PC-9 (cell line): ENCODE measurements at regions of chr1 and their contacts with region 1.

Region 1: DNA sequence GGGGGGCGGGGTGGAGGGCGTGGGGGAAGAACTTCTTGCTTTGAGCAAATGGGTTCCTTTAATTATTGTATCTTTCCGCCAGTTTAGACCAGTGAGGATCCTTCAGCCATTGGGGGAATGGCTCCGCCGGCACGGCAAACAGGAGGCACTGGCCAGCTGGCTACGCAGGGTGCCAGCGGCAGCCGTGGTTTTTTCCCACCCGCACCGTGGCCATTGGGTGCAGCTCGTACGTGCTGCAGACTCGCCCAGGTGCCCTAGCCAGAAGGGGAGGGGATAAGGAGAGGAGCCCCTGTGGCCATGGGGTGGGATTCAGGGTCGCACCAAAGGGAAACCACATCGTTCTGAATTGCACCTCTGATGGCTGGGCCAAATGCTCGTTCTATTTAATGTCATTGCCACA is 65.6 kb downstream of the RGSL1 start:
- DNase-seq: no peak
- H3K4me3 ChIP-seq: no peak overlapping the region
- H3K27ac ChIP-seq: no peak overlapping the region
- H3K4me1 ChIP-seq: no peaks in the 10 kb centered on the region
- H3K27me3 ChIP-seq: peaks cover 6% of the 10 kb centered on the region; the same call in 1 of the 2 replicates
- CTCF ChIP-seq: no peak

Region 2: DNA sequence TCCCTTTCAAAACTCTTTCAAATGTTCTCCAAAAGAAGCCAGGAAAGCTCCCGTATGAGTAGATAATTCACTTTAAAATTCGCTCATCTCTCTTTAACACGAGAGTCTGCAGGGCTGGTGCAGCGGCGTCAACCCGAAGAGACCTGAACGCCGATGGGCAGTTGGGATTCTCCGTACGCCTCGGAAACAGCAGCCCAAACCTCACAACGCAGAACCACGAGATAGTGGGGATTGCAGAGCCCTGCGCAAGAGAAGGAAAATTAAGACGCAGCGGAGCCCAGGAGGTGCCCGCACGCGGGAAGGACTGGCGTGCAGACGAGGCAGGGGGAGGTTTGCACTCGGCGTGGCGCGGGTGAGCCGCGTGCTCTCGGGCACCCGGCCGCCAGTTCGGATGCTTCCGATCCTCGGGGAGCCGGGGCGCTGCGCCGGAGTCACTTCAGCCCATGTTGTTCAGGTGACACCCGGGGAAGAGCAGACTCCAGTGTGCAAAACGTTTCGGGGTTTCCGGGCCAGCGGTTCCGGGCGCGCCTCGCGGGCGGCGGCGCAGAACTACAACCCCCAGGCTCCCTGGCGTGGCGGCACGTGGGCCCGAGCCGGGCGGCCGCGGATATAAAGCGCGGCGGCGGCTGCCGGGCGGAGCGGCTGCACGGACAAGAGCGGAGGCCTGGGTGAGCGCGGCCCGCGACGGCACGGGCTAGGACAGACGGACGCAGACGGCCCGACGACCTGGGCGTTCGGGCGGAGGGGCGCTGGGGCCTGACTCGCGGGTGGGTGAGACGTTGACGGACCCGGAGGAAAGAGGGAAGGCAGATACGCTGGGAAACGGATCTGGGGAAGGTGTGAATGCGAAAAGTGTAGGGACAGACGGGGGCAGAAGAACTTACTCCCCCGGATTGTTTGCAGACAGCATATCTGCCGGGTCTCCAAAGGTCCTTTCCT is 273.9 kb after region 1 on chr1 and contains the start of gene NPL:
- CTCF ChIA-PET with region 1: no interaction called
- POLR2A ChIA-PET with region 1: no interaction called
- intact Hi-C with region 1: loop called (anchors 10 kb)
- DNase-seq: peak in 1 of 2 experiments; percentile 75
- H3K4me3 ChIP-seq: peak within 1 kb of the TSS; percentile 63
- H3K27ac ChIP-seq: no peak within 1 kb of the TSS
- H3K4me1 ChIP-seq: peaks cover 6% of the 10 kb centered on the region
- H3K27me3 ChIP-seq: peaks cover 8% of the 10 kb centered on the region; the same call in 1 of the 2 replicates
- CTCF ChIP-seq: no peak
- total RNA-seq, gene NPL: 2.3 and 3.0 TPM in 2 replicates

Region 3: GRCh38 chr1:183281553-183282091 is 766.1 kb after region 1 on chr1:
- CTCF ChIA-PET with region 1: no interaction called
- POLR2A ChIA-PET with region 1: no interaction called
- intact Hi-C with region 1: no loop called
- DNase-seq: peak; percentile 77 to 91
- H3K4me3 ChIP-seq: no peak overlapping the region
- H3K27ac ChIP-seq: peak overlapping the region; percentile 45; the same call in 1 of the 2 replicates
- H3K4me1 ChIP-seq: peaks cover 54% of the 10 kb centered on the region
- H3K27me3 ChIP-seq: no peaks in the 10 kb centered on the region
- CTCF ChIP-seq: peak; percentile 96